ENCODE measurements at regions of chr9 and their contacts with region 1.

Region 1: GRCh38 chr9:107243751-107244150 is 39.3 kb upstream of the RAD23B start:
- DNase-seq: peak; percentile 79
- H3K4me3 Mint-ChIP-seq: no peak overlapping the region
- H3K27ac Mint-ChIP-seq: peak overlapping the region; percentile 73
- H3K4me1 Mint-ChIP-seq: peaks cover 33% of the 10 kb centered on the region
- H3K27me3 Mint-ChIP-seq: peaks cover 1% of the 10 kb centered on the region

Region 2: DNA sequence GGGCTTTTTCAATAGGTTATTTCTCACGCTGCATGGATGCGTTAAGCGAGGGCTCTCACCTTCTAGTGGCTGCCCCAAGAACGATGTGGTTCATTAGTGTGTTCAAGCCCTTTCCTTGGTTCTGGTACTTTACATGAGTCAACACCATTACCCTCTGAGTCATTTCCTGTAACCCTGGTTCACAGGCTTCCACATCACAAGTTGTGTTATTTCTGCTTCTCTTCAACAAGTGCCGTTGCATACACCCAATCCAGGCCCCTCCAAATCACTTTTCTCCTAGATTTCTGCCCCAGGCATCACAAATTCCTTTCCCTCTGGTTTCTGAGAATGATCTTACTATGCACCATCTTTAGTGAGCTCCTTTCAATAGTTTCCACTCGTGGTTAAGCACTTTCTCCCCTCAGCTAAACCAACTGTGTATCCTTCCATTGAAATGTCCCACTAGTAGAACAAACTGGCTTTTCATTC is 30.2 kb before region 1 on chr9:
- CTCF ChIA-PET with region 1: no interaction called
- intact Hi-C with region 1: loop called (anchors 1 kb)
- DNase-seq: peak; percentile 64
- H3K4me3 Mint-ChIP-seq: no peak overlapping the region
- H3K27ac Mint-ChIP-seq: peak overlapping the region; percentile 48
- H3K4me1 Mint-ChIP-seq: peaks cover 10% of the 10 kb centered on the region
- H3K27me3 Mint-ChIP-seq: peaks cover 9% of the 10 kb centered on the region

Region 3: DNA sequence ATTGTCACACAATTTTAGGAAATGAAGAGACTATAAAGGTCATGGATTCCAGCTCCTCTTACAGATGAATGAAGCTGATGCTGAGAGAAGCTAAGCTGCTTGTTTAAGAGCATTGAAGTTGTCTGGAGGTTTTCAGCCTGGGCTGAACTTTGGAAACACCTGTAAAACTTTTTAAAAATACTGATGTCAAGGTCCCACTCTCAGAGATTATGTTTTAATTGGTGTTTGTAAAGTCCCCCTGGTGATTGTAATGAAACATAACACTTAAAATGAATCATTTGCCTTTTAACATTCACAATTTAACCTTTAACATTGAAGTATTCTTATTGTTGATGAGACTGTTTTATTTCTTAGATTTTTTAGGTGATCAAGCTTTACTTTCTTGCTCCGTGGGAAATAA is 55.7 kb after region 1 on chr9:
- CTCF ChIA-PET with region 1: no interaction called
- intact Hi-C with region 1: no loop called
- DNase-seq: no peak
- H3K4me3 Mint-ChIP-seq: no peak overlapping the region
- H3K27ac Mint-ChIP-seq: no peak overlapping the region
- H3K4me1 Mint-ChIP-seq: peaks cover 39% of the 10 kb centered on the region
- H3K27me3 Mint-ChIP-seq: no peaks in the 10 kb centered on the region

Measured in activated naive CD4-positive, alpha-beta T cell treated with anti-CD3 and anti-CD28 coated beads for 36 hours (primary cell).